ENCODE measurements at regions of chr1 and their contacts with region 1.

Region 1: DNA sequence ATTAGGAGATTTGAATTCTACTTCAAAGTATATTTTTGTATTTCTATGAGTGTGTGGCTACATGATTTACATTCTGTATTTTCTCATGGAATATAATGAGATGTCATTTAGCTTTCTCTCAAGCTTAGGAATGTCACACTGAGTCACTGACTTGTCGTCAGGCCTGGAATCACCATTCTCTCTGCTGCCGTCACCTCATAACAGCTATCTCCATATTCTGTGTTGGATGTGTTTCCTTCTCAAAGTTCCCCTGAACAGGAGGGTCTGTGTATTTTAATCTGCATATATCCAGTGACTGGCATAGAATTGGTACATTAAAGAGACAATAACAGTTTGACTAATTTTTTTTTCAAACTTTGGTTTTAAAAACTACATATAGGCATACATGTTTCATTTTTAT is 35.9 kb downstream of the LYPLAL1 start:
- DNase-seq: no peak
- ATAC-seq: no peak
- H3K4me3 ChIP-seq: no peak overlapping the region
- H3K4me3 Mint-ChIP-seq: no peak overlapping the region
- H3K27ac ChIP-seq: no peak overlapping the region
- H3K27ac Mint-ChIP-seq: no peak overlapping the region
- H3K4me1 ChIP-seq: no peaks in the 10 kb centered on the region
- H3K4me1 Mint-ChIP-seq: no peaks in the 10 kb centered on the region
- H3K27me3 ChIP-seq: no peaks in the 10 kb centered on the region
- H3K27me3 Mint-ChIP-seq: no peaks in the 10 kb centered on the region
- CTCF ChIP-seq: no peak

Region 2: DNA sequence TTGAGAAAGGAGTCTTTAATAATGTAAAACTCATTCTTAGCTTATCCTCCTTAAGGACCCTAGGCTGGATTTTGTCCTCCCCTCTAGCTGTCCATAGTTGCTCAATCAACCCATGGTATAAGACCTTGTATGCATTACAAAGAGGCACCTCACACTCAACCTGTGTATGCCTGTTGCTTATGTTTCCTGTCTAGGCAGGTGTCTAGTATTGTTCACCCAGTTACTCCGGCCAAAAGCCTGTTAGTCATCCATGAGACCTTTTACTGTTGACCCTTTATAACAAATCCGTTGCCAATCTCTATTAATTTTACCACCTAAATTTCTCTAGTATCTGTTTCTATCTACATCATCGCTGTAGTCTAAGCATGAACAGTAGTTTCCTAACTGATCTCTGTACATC is 32.2 kb before region 1 on chr1:
- intact Hi-C with region 1: no loop called
- DNase-seq: no peak
- ATAC-seq: no peak
- H3K4me3 ChIP-seq: no peak overlapping the region
- H3K4me3 Mint-ChIP-seq: no peak overlapping the region
- H3K27ac ChIP-seq: no peak overlapping the region
- H3K27ac Mint-ChIP-seq: peak overlapping the region in 1 of 2 donors; percentile 41
- H3K4me1 ChIP-seq: peaks cover 8% of the 10 kb centered on the region
- H3K4me1 Mint-ChIP-seq: peaks cover 36 to 44% of the 10 kb centered on the region in 2 donors
- H3K27me3 ChIP-seq: no peaks in the 10 kb centered on the region
- H3K27me3 Mint-ChIP-seq: no peaks in the 10 kb centered on the region
- CTCF ChIP-seq: no peak

Region 3: GRCh38 chr1:219385786-219386427 is 176.3 kb after region 1 on chr1:
- intact Hi-C with region 1: loop called (anchors 10 kb)
- DNase-seq: peak in 1 of 2 donors; percentile 36
- ATAC-seq: peak in 1 of 3 donors; percentile 56
- H3K4me3 ChIP-seq: no peak overlapping the region
- H3K4me3 Mint-ChIP-seq: no peak overlapping the region
- H3K27ac ChIP-seq: no peak overlapping the region
- H3K27ac Mint-ChIP-seq: no peak overlapping the region
- H3K4me1 ChIP-seq: no peaks in the 10 kb centered on the region
- H3K4me1 Mint-ChIP-seq: no peaks in the 10 kb centered on the region
- H3K27me3 ChIP-seq: no peaks in the 10 kb centered on the region
- H3K27me3 Mint-ChIP-seq: no peaks in the 10 kb centered on the region
- CTCF ChIP-seq: peak; percentile 33

Region 4: DNA sequence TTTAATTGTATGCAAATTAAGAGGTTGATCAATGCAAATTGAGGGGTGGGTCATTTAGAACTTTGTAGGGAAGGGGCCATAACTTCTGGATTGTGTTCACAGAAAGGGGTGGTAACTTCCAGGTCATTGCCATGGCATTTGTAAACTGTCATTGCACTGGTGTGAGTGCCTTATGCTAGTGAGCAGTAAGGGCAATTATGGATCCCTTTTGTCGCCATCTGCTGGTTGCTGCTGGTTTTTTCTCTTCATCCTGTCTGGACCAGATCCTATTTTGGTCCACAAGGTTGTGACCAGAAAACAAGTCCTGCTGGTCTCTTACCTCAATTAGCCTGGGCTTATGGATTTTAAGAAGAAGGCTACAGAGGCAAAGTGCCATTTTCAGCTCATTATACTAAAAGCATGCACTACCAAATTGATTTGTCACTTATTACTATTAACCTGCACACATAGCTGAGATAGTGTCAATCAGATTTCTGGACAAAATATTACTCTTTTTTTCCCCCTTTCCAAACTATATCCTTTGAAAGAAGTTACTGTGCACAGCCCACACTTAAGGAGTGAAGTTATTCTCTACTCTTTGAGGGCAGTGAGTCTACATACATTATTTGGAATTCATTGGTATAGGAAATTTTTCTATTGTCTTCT is 207.1 kb after region 1 on chr1:
- intact Hi-C with region 1: loop called (anchors 2 kb)
- DNase-seq: peak in 1 of 2 donors; percentile 62
- ATAC-seq: peak; percentile 40 to 63 (median 52)
- H3K4me3 ChIP-seq: no peak overlapping the region
- H3K4me3 Mint-ChIP-seq: no peak overlapping the region
- H3K27ac ChIP-seq: no peak overlapping the region
- H3K27ac Mint-ChIP-seq: no peak overlapping the region
- H3K4me1 ChIP-seq: no peaks in the 10 kb centered on the region
- H3K4me1 Mint-ChIP-seq: no peaks in the 10 kb centered on the region
- H3K27me3 ChIP-seq: no peaks in the 10 kb centered on the region
- H3K27me3 Mint-ChIP-seq: no peaks in the 10 kb centered on the region
- CTCF ChIP-seq: peak; percentile 57

Measured in natural killer cell (primary cell).